ENCODE measurements at regions of chr12 and their contacts with region 1.

Region 1: DNA sequence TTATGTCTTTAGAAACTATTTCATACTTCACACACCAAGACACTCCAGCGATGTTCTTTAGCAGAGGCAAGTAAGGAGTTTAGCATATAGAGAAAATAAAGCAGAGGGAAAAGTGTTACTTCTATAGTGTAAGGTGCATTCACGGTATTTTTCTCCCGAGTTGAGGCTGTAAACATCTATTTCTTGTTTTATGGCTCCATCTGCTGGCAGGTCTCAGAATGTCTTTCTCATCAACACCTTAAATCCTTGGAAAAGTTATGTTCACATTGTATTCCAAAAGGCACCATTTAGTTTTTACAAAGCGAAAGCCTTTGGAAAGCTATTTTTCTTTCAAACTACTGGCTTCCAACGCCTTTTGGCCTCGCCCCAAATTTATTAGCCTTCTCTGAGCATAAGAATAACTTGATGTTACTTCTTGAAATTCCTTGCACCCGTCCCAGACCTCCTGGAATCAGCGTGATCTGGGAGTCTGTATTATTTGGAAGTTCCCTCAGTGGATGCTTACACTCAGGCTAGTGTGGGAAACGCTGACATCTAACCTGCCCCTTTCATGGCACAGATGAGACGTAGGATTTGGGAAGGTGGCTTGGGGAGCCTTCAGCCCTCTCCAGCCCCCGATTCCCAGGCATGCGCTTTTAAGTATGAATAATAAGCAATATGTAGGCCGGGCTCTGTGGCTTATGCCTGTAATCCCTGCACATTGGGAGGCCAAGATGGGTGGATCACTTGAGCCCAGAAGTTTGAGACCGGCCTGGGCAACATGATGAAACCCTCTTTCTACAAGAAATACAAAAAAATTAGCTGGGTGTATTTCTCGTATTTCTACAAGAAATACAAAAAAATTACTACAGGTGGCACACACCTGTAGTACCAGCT is 1.9 kb upstream of the PIWIL1 start:
- DNase-seq: peak; percentile 60
- H3K4me3 Mint-ChIP-seq: no peak overlapping the region
- H3K27ac Mint-ChIP-seq: no peak overlapping the region
- H3K4me1 Mint-ChIP-seq: peaks cover 18% of the 10 kb centered on the region
- H3K27me3 Mint-ChIP-seq: peaks cover 12% of the 10 kb centered on the region
- CTCF ChIP-seq: peak; percentile 71

Region 2: DNA sequence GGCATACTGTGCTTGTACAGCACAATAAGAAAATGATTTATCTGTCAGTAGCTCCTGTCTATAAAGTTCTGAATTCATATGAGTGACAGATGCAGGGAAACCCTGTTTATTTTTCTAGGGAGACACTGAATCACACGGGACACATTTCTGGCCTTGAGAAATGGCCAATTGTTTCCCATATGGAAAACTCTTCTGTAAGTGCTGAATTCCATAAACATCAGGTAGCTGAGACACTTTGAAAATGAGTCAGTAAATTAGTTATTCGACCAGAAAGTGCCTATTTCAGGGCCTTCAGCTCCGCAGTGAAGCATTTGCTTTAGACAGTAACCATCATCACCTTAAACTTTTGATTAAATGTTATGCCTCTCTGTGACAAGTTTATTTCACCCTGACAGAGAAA is 616.3 kb before region 1 on chr12:
- CTCF ChIA-PET with region 1: no interaction called
- POLR2A ChIA-PET with region 1: no interaction called
- intact Hi-C with region 1: no loop called
- DNase-seq: peak; percentile 28
- H3K4me3 Mint-ChIP-seq: no peak overlapping the region
- H3K27ac Mint-ChIP-seq: no peak overlapping the region
- H3K4me1 Mint-ChIP-seq: no peaks in the 10 kb centered on the region
- H3K27me3 Mint-ChIP-seq: no peaks in the 10 kb centered on the region
- CTCF ChIP-seq: no peak

Region 3: DNA sequence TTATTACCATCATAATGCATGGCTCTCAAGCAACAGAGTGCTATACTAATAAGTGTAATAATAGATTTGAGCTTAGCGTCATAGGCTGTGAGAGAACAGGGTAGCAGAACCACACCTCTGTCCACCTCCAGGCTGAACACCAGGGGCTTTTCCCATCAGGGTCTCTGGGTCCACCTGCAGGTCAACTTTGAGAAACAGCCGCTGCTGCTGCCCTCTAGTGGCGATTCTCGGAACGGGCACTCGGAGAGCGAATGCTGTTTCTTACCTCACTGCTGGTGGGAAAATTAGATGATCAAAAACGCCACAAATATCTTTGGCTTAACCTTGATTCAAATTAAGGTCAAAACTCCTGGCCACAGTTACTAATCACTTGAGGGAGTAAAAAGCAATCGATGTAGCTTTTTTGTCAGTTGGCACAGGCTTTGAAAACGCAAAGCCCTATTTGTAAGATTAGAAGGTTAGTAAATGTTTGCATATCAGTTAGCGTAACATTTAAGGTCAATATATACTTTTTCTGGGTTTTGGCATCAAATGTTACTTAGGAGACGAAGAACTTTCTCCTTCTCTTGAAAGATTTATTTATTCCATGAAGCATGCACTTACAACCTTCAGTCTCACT is 304.1 kb before region 1 on chr12:
- CTCF ChIA-PET with region 1: interaction called, 30 read pairs
- POLR2A ChIA-PET with region 1: no interaction called
- intact Hi-C with region 1: loop called (anchors 5 kb)
- DNase-seq: peak; percentile 58
- H3K4me3 Mint-ChIP-seq: no peak overlapping the region
- H3K27ac Mint-ChIP-seq: no peak overlapping the region
- H3K4me1 Mint-ChIP-seq: no peaks in the 10 kb centered on the region
- H3K27me3 Mint-ChIP-seq: peaks cover 40% of the 10 kb centered on the region
- CTCF ChIP-seq: peak; percentile 90

Region 4: DNA sequence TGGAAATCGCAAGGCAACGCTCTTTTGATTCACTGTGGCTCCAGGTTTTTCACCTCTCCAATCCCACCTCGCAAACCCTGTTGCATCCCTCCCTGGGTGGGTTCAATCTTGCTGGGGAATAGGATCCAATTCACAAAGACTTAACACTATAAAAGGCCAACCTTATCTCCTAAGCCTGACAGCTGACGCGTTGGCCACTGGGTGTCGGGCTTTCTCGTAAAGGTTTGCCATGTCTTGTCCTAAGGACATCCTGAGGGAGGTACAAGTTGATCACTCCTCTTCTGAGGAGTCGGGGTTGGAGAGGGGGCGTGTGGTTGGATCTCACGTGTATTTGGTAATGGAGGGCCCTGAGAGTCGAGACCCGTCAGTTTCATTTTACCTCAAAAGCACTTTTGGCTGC is 286.1 kb before region 1 on chr12:
- CTCF ChIA-PET with region 1: interaction called, 61 read pairs
- POLR2A ChIA-PET with region 1: no interaction called
- intact Hi-C with region 1: loop called (anchors 1 kb)
- DNase-seq: no peak
- H3K4me3 Mint-ChIP-seq: no peak overlapping the region
- H3K27ac Mint-ChIP-seq: no peak overlapping the region
- H3K4me1 Mint-ChIP-seq: no peaks in the 10 kb centered on the region
- H3K27me3 Mint-ChIP-seq: no peaks in the 10 kb centered on the region
- CTCF ChIP-seq: no peak

Region 5: GRCh38 chr12:130162267-130162666 is 173.5 kb before region 1 on chr12 and contains the start of gene FZD10:
- CTCF ChIA-PET with region 1: interaction called, 3 read pairs
- POLR2A ChIA-PET with region 1: no interaction called
- intact Hi-C with region 1: loop called (anchors 10 kb)
- DNase-seq: no peak
- H3K4me3 Mint-ChIP-seq: peak within 1 kb of the TSS; percentile 65
- H3K27ac Mint-ChIP-seq: no peak within 1 kb of the TSS
- H3K4me1 Mint-ChIP-seq: no peaks in the 10 kb centered on the region
- H3K27me3 Mint-ChIP-seq: peaks cover 4% of the 10 kb centered on the region
- CTCF ChIP-seq: no peak
- total RNA-seq, gene FZD10: 0.15 TPM in 1 of 2 replicates, not detected in the other

Region 6: GRCh38 chr12:130222519-130223218 is 113.1 kb before region 1 on chr12:
- CTCF ChIA-PET with region 1: no interaction called
- POLR2A ChIA-PET with region 1: no interaction called
- intact Hi-C with region 1: no loop called
- DNase-seq: no peak
- H3K4me3 Mint-ChIP-seq: no peak overlapping the region
- H3K27ac Mint-ChIP-seq: no peak overlapping the region
- H3K4me1 Mint-ChIP-seq: no peaks in the 10 kb centered on the region
- H3K27me3 Mint-ChIP-seq: no peaks in the 10 kb centered on the region
- CTCF ChIP-seq: no peak

Region 7: GRCh38 chr12:130281153-130281799 is 54.5 kb before region 1 on chr12:
- CTCF ChIA-PET with region 1: interaction called, 4 read pairs
- POLR2A ChIA-PET with region 1: no interaction called
- intact Hi-C with region 1: loop called (anchors 1 kb)
- DNase-seq: peak; percentile 8
- H3K4me3 Mint-ChIP-seq: no peak overlapping the region
- H3K27ac Mint-ChIP-seq: no peak overlapping the region
- H3K4me1 Mint-ChIP-seq: no peaks in the 10 kb centered on the region
- H3K27me3 Mint-ChIP-seq: no peaks in the 10 kb centered on the region
- CTCF ChIP-seq: peak; percentile 65